Caco-2 (cell line): ENCODE measurements at regions of chr1 and their contacts with region 1.

Region 1: GRCh38 chr1:44485229-44485933 is 80.3 kb downstream of the RNF220 start:
- DNase-seq: no peak
- H3K4me3 ChIP-seq: no peak overlapping the region
- H3K4me3 Mint-ChIP-seq: no peak overlapping the region
- H3K27ac Mint-ChIP-seq: no peak overlapping the region
- H3K4me1 ChIP-seq: no peaks in the 10 kb centered on the region
- H3K4me1 Mint-ChIP-seq: no peaks in the 10 kb centered on the region
- H3K27me3 ChIP-seq: no peaks in the 10 kb centered on the region
- H3K27me3 Mint-ChIP-seq: peaks cover 10% of the 10 kb centered on the region
- CTCF ChIP-seq: no peak

Region 2: DNA sequence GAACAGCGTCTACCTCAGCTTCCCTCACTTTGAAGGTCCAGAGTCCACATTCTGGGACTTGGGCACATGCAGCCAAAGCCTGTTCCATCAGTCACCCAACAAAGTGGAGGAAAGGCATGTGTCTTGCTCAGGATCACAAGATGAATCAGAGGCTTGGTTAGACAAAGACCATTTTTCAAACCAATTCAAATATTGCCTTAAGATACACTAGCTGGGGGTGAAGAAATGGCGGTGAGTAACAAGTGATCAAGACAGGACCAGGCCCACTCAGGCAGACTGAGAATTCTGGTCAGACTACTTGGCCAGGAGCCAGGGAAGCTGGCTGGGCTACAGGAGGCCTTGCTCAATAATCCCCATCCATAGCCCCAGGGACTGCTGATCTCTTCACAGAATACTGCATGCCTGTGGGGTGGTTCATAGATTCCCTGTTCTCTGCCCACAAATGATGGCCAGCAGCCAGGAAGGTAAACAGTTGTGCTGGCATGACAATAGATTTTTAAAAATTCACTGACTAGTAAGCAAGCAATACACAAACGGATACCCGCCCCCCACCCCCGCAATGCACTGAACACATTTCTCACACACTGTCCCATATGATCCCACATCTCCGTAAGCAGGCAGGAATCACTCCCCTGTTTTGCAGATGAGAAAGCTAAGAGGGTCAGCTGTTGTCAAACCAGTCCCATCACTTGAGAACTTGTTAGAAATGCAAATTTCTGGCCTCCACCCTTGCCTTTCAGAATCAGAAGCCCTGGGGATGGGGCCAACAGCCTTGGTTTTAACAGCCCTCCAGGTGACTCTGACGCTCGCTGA is 157.5 kb before region 1 on chr1:
- CTCF ChIA-PET with region 1: no interaction called
- POLR2A ChIA-PET with region 1: interaction called, 12 read pairs
- intact Hi-C with region 1: no loop called
- DNase-seq: peak; percentile 79 to 81
- H3K4me3 ChIP-seq: no peak overlapping the region
- H3K4me3 Mint-ChIP-seq: no peak overlapping the region
- H3K27ac Mint-ChIP-seq: no peak overlapping the region
- H3K4me1 ChIP-seq: peaks cover 13% of the 10 kb centered on the region
- H3K4me1 Mint-ChIP-seq: peaks cover 10% of the 10 kb centered on the region
- H3K27me3 ChIP-seq: no peaks in the 10 kb centered on the region
- H3K27me3 Mint-ChIP-seq: no peaks in the 10 kb centered on the region
- CTCF ChIP-seq: no peak

Region 3: GRCh38 chr1:44616991-44617702 is 131.8 kb after region 1 on chr1:
- CTCF ChIA-PET with region 1: no interaction called
- POLR2A ChIA-PET with region 1: no interaction called
- intact Hi-C with region 1: no loop called
- DNase-seq: no peak
- H3K4me3 ChIP-seq: no peak overlapping the region
- H3K4me3 Mint-ChIP-seq: peak overlapping the region; percentile 54
- H3K27ac Mint-ChIP-seq: no peak overlapping the region
- H3K4me1 ChIP-seq: no peaks in the 10 kb centered on the region
- H3K4me1 Mint-ChIP-seq: no peaks in the 10 kb centered on the region
- H3K27me3 ChIP-seq: peaks cover 2% of the 10 kb centered on the region; the same call in 1 of the 2 replicates
- H3K27me3 Mint-ChIP-seq: peaks cover 8% of the 10 kb centered on the region
- CTCF ChIP-seq: no peak